ENCODE measurements at regions of chr12 and their contacts with region 1.

Region 1: DNA sequence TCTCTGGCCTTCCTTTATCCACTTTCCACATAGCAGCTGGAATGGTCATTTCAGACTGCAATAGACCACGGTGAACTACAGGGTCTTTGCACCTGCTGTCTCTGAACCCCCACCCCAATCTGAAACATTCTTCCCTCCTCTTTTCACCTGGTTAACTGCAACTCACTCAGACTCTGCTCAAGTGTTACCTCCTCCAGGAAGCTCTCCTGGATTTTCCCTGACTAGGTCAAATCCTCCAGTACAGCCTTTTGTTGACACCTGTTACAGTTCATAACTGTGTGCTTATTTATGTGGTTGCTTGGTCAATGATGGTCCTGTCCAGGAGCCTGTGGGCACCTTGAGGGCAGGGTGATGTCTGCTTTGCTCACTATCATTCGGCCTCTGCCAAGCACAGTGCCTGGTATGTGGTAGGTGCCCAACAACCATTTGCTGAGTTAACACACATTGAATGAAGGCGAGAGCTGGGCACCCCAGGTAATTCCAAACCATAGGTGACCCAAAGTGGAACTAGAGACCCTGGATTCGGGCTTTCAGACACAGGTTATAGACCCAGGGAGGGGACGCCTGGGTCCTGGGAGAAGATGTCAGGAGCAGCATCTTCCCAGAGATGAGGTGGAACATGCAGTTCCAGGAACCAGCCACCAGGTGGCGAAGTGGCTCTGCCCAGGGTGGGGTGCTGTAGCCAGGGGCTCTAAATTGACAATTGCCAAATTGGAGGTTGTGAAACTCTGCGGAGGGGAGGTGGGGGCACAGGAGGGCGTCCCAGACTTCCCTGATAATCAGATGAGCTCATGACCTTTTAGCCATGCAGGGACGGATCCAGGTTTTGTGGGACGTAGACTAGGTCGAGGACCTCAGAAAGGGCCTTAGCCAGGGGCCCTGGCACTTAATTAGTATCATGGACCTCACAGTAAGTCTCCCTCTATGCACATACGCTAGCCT is 28.1 kb downstream of the TRPV4 start:
- DNase-seq: peak; percentile 60 to 83 (median 65)
- H3K4me3 ChIP-seq: no peak overlapping the region
- H3K27ac ChIP-seq: no peak overlapping the region
- H3K4me1 ChIP-seq: no peaks in the 10 kb centered on the region
- H3K27me3 ChIP-seq: no peaks in the 10 kb centered on the region
- CTCF ChIP-seq: peak; percentile 91 to 98 (median 94)
- POLR2A ChIP-seq: no peak

Region 2: GRCh38 chr12:109844983-109845823 is 40.1 kb after region 1 on chr12:
- intact Hi-C with region 1: loop called (anchors 2 to 5 kb)
- DNase-seq: peak; percentile 84 to 91 (median 88)
- H3K4me3 ChIP-seq: peak overlapping the region in 1 of 4 donors; percentile 20
- H3K27ac ChIP-seq: no peak overlapping the region
- H3K4me1 ChIP-seq: peaks cover 0 to 8% of the 10 kb centered on the region in 2 donors
- H3K27me3 ChIP-seq: no peaks in the 10 kb centered on the region
- CTCF ChIP-seq: peak; percentile 94 to 99 (median 97)
- POLR2A ChIP-seq: no peak

Region 3: DNA sequence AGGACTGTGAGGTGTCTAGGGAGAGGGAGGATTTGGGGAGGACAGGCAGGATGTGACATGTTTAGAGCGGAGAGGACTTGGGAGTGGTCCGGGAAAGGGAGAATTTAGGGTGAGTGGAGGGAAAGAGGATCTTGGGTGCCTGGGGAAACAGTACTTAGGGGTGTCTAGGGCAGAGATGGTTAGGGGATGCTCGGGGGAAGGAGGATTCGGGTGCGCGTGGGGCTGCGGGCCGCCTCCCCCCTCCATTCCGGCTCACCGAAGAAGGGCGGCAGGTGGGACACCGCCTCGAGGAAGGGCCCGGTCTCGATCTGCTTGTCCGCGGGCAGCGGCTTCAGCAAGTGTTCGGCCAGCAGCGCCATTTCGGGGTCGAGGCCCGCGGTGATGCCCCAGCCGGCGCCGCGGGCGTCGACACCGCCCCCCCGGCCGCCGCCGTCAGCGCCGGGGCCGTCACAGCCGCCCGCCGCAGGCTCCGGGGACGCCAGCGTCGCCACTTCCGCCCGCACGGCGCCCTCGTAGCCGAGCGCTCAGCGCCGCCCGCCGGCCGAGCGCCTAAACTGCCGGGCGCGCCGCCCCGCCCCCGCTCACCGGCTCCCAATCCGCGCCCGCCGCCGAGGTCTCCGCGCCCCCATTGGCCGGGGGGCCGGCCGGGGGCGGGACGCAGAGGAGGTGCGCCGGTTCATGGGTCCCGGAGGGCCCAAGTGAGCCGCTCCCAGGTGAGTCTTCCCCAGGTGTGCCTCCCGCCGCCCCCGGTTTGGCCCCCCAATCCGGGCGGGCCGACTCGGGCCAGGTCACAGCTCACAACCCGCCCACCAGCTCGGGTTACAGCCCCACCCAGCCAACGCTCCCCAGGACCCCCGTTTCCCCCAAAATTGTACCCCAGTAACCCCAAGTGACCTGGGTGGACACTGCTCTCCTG is 75.2 kb after region 1 on chr12 and contains the start of gene GLTP:
- intact Hi-C with region 1: loop called in 1 of 2 experiments (anchors 2 kb)
- DNase-seq: peak; percentile 73 to 88 (median 82)
- H3K4me3 ChIP-seq: peak within 1 kb of the TSS in 3 of 4 donors; percentile 60 to 92 (median 83)
- H3K27ac ChIP-seq: peak within 1 kb of the TSS in 3 of 5 donors; percentile 63 to 89 (median 71)
- H3K4me1 ChIP-seq: peaks cover 11 to 30% of the 10 kb centered on the region in 2 donors
- H3K27me3 ChIP-seq: no peaks in the 10 kb centered on the region
- CTCF ChIP-seq: peak in 3 of 6 experiments; percentile 62 to 98 (median 94)
- POLR2A ChIP-seq: peak; percentile 56 to 61
- total RNA-seq, gene GLTP: 29.7 to 73.7 (median 40.5) TPM